Spleen (tissue), 13 donors: ENCODE measurements at regions of chr3 and their contacts with region 1.

Region 1: DNA sequence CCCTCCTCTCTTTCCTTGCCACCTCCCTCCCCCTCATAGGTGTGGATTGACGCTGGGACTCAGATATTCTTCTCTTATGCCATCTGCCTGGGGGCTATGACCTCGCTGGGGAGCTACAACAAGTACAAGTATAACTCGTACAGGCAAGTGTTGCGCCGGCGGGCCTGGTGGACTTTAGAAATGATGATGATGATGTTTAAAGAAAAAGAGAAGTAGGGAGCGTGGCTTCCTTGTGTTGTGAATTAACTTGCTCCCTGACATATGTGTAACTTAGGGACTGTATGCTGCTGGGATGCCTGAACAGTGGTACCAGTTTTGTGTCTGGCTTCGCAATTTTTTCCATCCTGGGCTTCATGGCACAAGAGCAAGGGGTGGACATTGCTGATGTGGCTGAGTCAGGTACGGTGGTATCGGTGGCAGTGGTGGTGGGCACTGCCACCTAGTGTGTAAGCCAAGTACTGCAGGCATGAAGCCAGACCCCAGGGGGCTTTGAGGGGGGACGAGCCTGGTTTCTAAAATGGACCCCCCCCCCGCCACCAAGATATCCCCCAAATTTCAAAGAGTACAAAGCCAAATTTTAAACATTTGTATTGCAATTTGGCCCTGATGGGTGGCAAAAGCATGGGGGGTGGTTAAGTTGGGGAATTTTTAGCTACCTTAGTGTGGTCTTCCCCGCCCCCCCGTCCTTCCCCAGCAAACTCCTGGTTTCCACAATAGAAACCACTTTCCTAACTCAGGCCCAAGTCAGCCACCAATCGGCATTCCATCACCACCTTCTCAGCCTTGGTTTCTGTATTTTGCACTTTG is 65.6 kb downstream of the SLC6A6 start:
- DNase-seq: no peak
- H3K4me3 ChIP-seq: no peak overlapping the region
- H3K27ac ChIP-seq: peak overlapping the region in 2 of 8 donors; percentile 8 to 43
- H3K4me1 ChIP-seq: peaks cover 0 to 25% (median 3%) of the 10 kb centered on the region in 6 donors
- H3K27me3 ChIP-seq: no peaks in the 10 kb centered on the region
- CTCF ChIP-seq: peak; percentile 77 to 91 (median 86)
- POLR2A ChIP-seq: no peak

Region 2: DNA sequence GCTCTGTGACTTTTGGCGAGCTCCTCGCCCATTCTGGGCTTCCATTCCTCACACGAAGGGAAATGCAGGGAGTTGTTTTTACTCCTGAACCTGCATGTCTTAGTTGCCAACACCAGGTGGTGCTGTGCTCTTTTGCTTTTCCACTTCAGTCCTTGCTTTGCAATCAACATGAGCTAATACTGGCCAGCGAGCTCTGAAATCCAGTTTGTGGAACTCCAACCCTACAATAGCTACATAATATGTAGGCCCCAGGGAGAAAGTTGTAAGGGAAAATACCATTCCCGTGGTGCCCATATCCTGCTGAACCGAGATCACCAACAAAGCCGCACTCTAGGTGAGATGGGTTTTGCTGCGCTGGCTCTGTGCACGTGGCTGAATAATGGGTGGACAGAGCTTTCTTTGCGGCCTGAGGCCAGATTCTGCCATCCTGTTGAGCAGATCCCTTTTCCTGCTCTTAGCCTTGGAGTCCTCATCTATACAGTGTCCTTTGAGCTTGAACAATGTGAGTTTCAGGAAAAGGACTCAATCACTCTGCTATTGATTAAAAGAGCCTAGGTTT is 264.4 kb before region 1 on chr3:
- intact Hi-C with region 1: loop called (anchors 5 kb)
- DNase-seq: no peak
- H3K4me3 ChIP-seq: no peak overlapping the region
- H3K27ac ChIP-seq: peak overlapping the region in 7 of 8 donors; percentile 56 to 74 (median 68)
- H3K4me1 ChIP-seq: peaks cover 4 to 36% (median 18%) of the 10 kb centered on the region in 6 donors
- H3K27me3 ChIP-seq: no peaks in the 10 kb centered on the region
- CTCF ChIP-seq: peak; percentile 69 to 91 (median 87)
- POLR2A ChIP-seq: no peak

Region 3: DNA sequence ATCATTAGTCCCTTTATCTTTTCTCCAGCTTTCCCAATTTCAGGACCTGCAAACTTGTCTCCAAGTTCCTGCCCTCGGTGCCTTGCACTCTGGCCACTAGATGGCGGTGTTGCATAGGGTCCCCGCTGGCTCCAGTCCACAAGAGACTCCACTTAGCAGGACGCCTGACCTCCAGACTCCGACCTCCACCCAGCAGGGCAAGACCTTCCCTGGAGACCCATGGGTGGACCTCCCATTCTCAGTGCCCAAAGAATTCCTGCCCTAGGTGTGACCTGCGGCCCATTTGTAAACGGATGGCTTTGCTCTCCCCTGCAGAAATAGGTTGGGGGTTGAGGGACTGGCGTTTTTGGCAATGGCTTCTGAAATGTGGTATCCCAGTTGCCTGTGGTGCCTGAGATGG is 206.8 kb before region 1 on chr3:
- intact Hi-C with region 1: loop called (anchors 5 kb)
- DNase-seq: peak; percentile 94
- H3K4me3 ChIP-seq: no peak overlapping the region
- H3K27ac ChIP-seq: no peak overlapping the region
- H3K4me1 ChIP-seq: peaks cover 0 to 19% (median 10%) of the 10 kb centered on the region in 6 donors
- H3K27me3 ChIP-seq: no peaks in the 10 kb centered on the region
- CTCF ChIP-seq: peak; percentile 90 to 98 (median 96)
- POLR2A ChIP-seq: no peak

Region 4: DNA sequence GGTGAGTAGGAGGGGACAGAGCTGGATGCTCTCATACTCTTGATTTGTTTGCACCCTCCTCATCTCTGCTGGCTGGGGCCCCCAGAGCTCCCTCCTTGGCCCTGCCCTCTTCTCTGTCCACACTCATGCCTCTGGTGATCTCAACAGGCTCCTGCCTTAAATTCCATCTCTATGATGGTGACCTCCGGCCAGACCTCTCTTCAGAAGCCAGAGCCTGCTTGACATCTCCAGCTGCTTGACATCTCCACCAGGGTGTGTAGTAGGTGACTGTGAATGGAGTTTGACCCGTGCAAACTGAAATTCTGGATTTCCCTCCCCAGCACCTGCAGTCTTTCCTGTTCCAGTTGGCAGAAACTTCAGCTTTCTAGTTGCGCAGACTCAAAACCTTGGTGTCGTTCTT is 346.5 kb after region 1 on chr3:
- intact Hi-C with region 1: no loop called
- DNase-seq: no peak
- H3K4me3 ChIP-seq: no peak overlapping the region
- H3K27ac ChIP-seq: no peak overlapping the region
- H3K4me1 ChIP-seq: peaks cover 0 to 62% (median 28%) of the 10 kb centered on the region in 6 donors
- H3K27me3 ChIP-seq: peaks cover 0 to 54% (median 17%) of the 10 kb centered on the region in 7 donors
- CTCF ChIP-seq: no peak
- POLR2A ChIP-seq: no peak